HCT116 (cell line): ENCODE measurements at regions of chr6 and their contacts with region 1.

Region 1: GRCh38 chr6:42901536-42901957 is 14.3 kb upstream of the PTCRA start:
- DNase-seq: peak; percentile 83
- ATAC-seq: peak; percentile 96
- H3K4me3 ChIP-seq: peak overlapping the region in 1 of 2 experiments; percentile 12; a peak in 1 of 4 replicates
- H3K27ac ChIP-seq: no peak overlapping the region
- H3K4me1 ChIP-seq: peaks cover 0 to 11% of the 10 kb centered on the region in 2 experiments; a peak in 3 of 4 replicates
- H3K27me3 ChIP-seq: no peaks in the 10 kb centered on the region
- CTCF ChIP-seq: peak; percentile 72 to 96 (median 84)
- POLR2A ChIP-seq: no peak
- RAD21 ChIP-seq: peak; percentile 99

Region 2: GRCh38 chr6:42075159-42075838 is 826.2 kb before region 1 on chr6:
- CTCF ChIA-PET with region 1: no interaction called
- POLR2A ChIA-PET with region 1: no interaction called
- RAD21 ChIA-PET with region 1: no interaction called
- intact Hi-C with region 1: loop called (anchors 1 kb)
- DNase-seq: no peak
- ATAC-seq: peak; percentile 90
- H3K4me3 ChIP-seq: no peak overlapping the region
- H3K27ac ChIP-seq: no peak overlapping the region
- H3K4me1 ChIP-seq: no peaks in the 10 kb centered on the region
- H3K27me3 ChIP-seq: no peaks in the 10 kb centered on the region
- CTCF ChIP-seq: peak; percentile 89 to 97 (median 91)
- POLR2A ChIP-seq: no peak
- RAD21 ChIP-seq: peak; percentile 97

Region 3: DNA sequence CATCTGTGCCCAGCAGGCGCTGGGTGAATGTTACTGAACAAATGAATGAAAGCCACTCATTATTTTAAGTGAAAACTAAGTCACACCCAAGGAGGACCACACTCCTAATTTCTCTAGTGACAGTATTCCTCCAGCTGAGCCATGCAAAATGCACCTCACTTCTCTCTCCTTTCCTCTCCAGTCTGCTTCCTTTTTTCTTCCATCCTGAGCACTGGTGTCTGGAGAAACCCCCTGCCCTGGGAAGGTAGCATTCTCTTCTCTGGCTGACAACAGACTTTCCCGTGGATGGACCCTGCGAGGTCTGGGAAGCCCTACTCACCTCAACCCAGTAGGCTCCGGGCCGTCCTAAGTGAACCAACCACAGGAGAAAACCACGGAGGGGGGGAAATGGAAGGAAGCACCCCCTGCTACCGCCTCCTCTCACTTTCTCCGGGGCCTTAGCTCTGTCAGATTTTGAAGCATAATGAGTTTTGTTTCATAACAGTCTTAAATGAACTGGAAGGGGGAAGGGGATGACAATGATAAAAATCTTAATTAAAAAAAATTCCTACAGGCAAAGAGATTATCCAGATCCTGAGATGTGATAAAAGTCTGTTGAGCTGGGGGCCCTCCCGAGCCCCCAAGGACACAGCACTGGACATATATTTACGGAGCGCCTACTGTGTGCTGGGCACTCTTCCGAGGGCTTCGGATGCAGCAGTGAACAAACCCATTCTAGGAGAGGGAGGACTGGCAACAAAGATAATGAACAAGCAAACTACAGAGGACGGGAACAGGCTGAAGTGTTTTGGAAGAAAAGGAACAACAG is 472.3 kb before region 1 on chr6:
- CTCF ChIA-PET with region 1: no interaction called
- POLR2A ChIA-PET with region 1: no interaction called
- RAD21 ChIA-PET with region 1: no interaction called
- intact Hi-C with region 1: no loop called
- DNase-seq: no peak
- ATAC-seq: no peak
- H3K4me3 ChIP-seq: no peak overlapping the region
- H3K27ac ChIP-seq: no peak overlapping the region
- H3K4me1 ChIP-seq: peaks cover 7 to 8% of the 10 kb centered on the region in 2 experiments; a peak in 3 of 4 replicates
- H3K27me3 ChIP-seq: no peaks in the 10 kb centered on the region
- CTCF ChIP-seq: no peak
- POLR2A ChIP-seq: no peak
- RAD21 ChIP-seq: no peak

Region 4: GRCh38 chr6:42661540-42662153 is 239.9 kb before region 1 on chr6:
- CTCF ChIA-PET with region 1: no interaction called
- POLR2A ChIA-PET with region 1: interaction called, 3 read pairs
- RAD21 ChIA-PET with region 1: no interaction called
- intact Hi-C with region 1: loop called (anchors 1 kb)
- DNase-seq: peak; percentile 50
- ATAC-seq: peak; percentile 88
- H3K4me3 ChIP-seq: no peak overlapping the region
- H3K27ac ChIP-seq: no peak overlapping the region
- H3K4me1 ChIP-seq: peaks cover 0 to 2% of the 10 kb centered on the region in 2 experiments; a peak in 2 of 4 replicates
- H3K27me3 ChIP-seq: no peaks in the 10 kb centered on the region
- CTCF ChIP-seq: peak; percentile 81 to 94 (median 87); a peak in 5 of 6 replicates
- POLR2A ChIP-seq: no peak
- RAD21 ChIP-seq: peak; percentile 92

Region 5: GRCh38 chr6:42915732-42916131 is 14.2 kb after region 1 on chr6 and contains the start of gene PTCRA:
- CTCF ChIA-PET with region 1: no interaction called
- POLR2A ChIA-PET with region 1: no interaction called
- RAD21 ChIA-PET with region 1: no interaction called
- intact Hi-C with region 1: no loop called
- DNase-seq: no peak
- ATAC-seq: no peak
- H3K4me3 ChIP-seq: no peak within 1 kb of the TSS
- H3K27ac ChIP-seq: no peak within 1 kb of the TSS
- H3K4me1 ChIP-seq: no peaks in the 10 kb centered on the region; a peak in 1 of 4 replicates
- H3K27me3 ChIP-seq: no peaks in the 10 kb centered on the region
- CTCF ChIP-seq: no peak
- POLR2A ChIP-seq: no peak
- RAD21 ChIP-seq: no peak
- total RNA-seq, gene PTCRA: not detected

Region 6: GRCh38 chr6:43059168-43060033 is 157.9 kb after region 1 on chr6 and contains the starts of genes KLC4 and MRPL2:
- CTCF ChIA-PET with region 1: no interaction called
- POLR2A ChIA-PET with region 1: no interaction called
- RAD21 ChIA-PET with region 1: no interaction called
- intact Hi-C with region 1: loop called (anchors 1 kb)
- DNase-seq: peak; percentile 97
- ATAC-seq: peak; percentile 96
- H3K4me3 ChIP-seq: peak within 1 kb of the TSS; percentile 89
- H3K27ac ChIP-seq: peak within 1 kb of the TSS; percentile 65
- H3K4me1 ChIP-seq: peaks cover 10 to 25% of the 10 kb centered on the region in 2 experiments; a peak in 3 of 4 replicates
- H3K27me3 ChIP-seq: no peaks in the 10 kb centered on the region
- CTCF ChIP-seq: no peak
- POLR2A ChIP-seq: no peak
- RAD21 ChIP-seq: no peak
- total RNA-seq, gene KLC4: 16.2 TPM
- total RNA-seq, gene MRPL2: 123 TPM

Region 7: GRCh38 chr6:43334466-43335095 is 433.0 kb after region 1 on chr6:
- CTCF ChIA-PET with region 1: interaction called, 3 read pairs
- POLR2A ChIA-PET with region 1: no interaction called
- RAD21 ChIA-PET with region 1: no interaction called
- intact Hi-C with region 1: loop called (anchors 1 kb)
- DNase-seq: peak; percentile 68
- ATAC-seq: peak; percentile 98
- H3K4me3 ChIP-seq: no peak overlapping the region
- H3K27ac ChIP-seq: no peak overlapping the region
- H3K4me1 ChIP-seq: peaks cover 4 to 6% of the 10 kb centered on the region in 2 experiments; a peak in 3 of 4 replicates
- H3K27me3 ChIP-seq: no peaks in the 10 kb centered on the region
- CTCF ChIP-seq: peak; percentile 60 to 79 (median 60); a peak in 5 of 6 replicates
- POLR2A ChIP-seq: no peak
- RAD21 ChIP-seq: peak; percentile 67

Region 8: DNA sequence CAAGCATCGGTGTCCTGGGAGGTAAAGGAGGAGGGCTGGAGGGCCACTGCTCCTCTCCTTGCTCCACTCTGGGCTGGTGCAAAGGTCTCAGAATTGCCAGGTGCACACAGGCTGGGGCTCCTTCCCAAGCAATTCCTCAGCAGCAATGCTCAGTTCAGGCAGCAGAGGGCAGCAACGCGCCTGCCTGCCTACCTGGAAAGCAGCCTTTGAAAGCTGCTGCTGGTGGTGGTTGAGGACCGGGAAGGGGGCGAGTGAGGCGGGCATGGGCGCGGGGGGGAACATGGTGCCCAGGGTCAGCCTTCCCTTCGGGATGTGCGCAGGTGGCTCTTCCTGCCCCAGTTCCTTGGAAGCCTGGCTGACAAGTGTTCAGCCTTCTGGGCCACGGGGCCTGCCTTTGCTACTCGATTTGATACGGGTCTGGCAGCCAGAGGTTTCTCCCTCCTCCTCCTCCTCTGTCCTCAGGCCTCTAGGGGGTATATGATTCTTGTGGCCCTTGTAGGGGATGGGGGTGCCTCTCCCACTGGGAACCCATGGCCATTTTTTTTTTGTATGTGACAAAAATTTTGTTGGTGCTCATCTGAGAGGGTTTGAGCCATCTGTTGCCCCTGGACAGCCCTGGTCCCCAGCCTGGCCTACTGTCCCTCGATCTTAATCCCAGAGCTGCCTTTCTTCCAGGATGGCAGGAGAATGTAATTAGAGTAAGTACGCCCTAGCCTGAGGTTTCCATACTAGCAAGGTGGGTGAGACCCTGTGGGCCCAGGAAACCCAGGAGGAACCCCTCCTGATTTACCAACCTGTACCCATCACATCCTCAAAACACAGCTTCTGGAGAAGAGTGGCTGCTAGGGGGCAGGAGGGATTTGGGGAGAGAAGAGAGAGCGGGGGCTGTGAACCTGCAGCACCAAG is 766.0 kb after region 1 on chr6:
- CTCF ChIA-PET with region 1: no interaction called
- POLR2A ChIA-PET with region 1: no interaction called
- RAD21 ChIA-PET with region 1: no interaction called
- intact Hi-C with region 1: loop called (anchors 5 kb)
- DNase-seq: peak; percentile 43
- ATAC-seq: peak; percentile 68
- H3K4me3 ChIP-seq: no peak overlapping the region; a peak in 1 of 4 replicates
- H3K27ac ChIP-seq: peak overlapping the region; percentile 49; the same call in 1 of the 2 replicates
- H3K4me1 ChIP-seq: peaks cover 12 to 49% of the 10 kb centered on the region in 2 experiments
- H3K27me3 ChIP-seq: no peaks in the 10 kb centered on the region
- CTCF ChIP-seq: peak; percentile 89 to 97 (median 94)
- POLR2A ChIP-seq: no peak
- RAD21 ChIP-seq: peak; percentile 95